ENCODE measurements at regions of chr5 and their contacts with region 1.

Region 1: GRCh38 chr5:149731639-149732323 is 1.7 kb downstream of the PPARGC1B start:
- DNase-seq: peak; percentile 85 to 93
- H3K4me3 ChIP-seq: peak overlapping the region; percentile 90 to 100 (median 97)
- H3K27ac ChIP-seq: peak overlapping the region; percentile 83 to 95 (median 94)
- H3K4me1 ChIP-seq: peaks cover 0 to 58% (median 39%) of the 10 kb centered on the region in 4 donors
- H3K27me3 ChIP-seq: no peaks in the 10 kb centered on the region
- CTCF ChIP-seq: no peak
- EP300 ChIP-seq: no peak
- POLR2A ChIP-seq: no peak

Region 2: DNA sequence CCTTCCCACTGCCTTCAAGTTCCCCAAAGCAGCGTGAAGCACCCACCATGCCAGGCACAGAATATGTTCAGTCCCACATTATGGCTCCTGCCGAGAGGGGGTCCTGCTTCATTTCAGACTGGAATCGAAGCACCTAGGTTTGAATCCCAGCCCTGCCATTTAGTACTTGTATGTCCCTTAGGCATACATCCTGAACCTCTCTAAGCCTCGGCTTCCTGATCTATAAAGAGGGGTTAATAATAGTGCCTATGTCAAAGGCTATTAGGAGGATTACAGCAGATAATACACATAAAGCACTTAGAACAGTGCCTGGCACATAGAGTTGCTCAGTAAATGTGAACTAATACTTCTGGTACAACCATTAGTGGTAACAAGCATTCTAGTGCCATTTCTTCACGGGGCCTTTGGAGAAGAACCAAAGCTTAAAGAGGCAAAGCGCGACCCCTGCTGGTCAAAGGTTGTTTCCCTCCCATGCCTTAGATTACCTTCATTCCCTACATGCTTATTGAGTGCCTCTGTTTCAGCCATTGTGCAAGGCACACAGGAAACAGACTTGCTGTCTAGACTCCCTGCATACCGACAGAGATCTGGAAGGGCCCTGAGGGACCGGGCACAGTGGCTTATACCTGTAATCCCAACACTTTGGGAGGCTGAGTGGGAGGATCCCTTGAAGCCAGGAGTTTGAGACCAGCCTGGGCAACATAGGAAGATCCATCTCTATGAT is 96.5 kb after region 1 on chr5:
- intact Hi-C with region 1: loop called (anchors 10 kb)
- DNase-seq: peak; percentile 91 to 95
- H3K4me3 ChIP-seq: no peak overlapping the region
- H3K27ac ChIP-seq: peak overlapping the region in 3 of 5 donors; percentile 1 to 85 (median 54)
- H3K4me1 ChIP-seq: peaks cover 3 to 43% (median 21%) of the 10 kb centered on the region in 4 donors
- H3K27me3 ChIP-seq: no peaks in the 10 kb centered on the region
- CTCF ChIP-seq: peak in 6 of 7 experiments; percentile 36 to 93 (median 88)
- EP300 ChIP-seq: no peak
- POLR2A ChIP-seq: no peak

Region 3: GRCh38 chr5:150129813-150130492 is 398.2 kb after region 1 on chr5:
- intact Hi-C with region 1: no loop called
- DNase-seq: peak; percentile 78 to 86
- H3K4me3 ChIP-seq: peak overlapping the region in 2 of 4 donors; percentile 19 to 30
- H3K27ac ChIP-seq: no peak overlapping the region
- H3K4me1 ChIP-seq: peaks cover 9 to 23% (median 10%) of the 10 kb centered on the region in 4 donors
- H3K27me3 ChIP-seq: no peaks in the 10 kb centered on the region
- CTCF ChIP-seq: peak in 5 of 7 experiments; percentile 88 to 93 (median 89)
- EP300 ChIP-seq: no peak
- POLR2A ChIP-seq: no peak

Region 4: GRCh38 chr5:150339165-150339564 is 607.4 kb after region 1 on chr5:
- intact Hi-C with region 1: no loop called
- DNase-seq: peak in 1 of 2 donors; percentile 58
- H3K4me3 ChIP-seq: no peak overlapping the region
- H3K27ac ChIP-seq: no peak overlapping the region
- H3K4me1 ChIP-seq: peaks cover 0 to 7% (median 0%) of the 10 kb centered on the region in 4 donors
- H3K27me3 ChIP-seq: no peaks in the 10 kb centered on the region
- CTCF ChIP-seq: no peak
- EP300 ChIP-seq: no peak
- POLR2A ChIP-seq: no peak